ENCODE measurements at regions of chr17 and their contacts with region 1.

Region 1: DNA sequence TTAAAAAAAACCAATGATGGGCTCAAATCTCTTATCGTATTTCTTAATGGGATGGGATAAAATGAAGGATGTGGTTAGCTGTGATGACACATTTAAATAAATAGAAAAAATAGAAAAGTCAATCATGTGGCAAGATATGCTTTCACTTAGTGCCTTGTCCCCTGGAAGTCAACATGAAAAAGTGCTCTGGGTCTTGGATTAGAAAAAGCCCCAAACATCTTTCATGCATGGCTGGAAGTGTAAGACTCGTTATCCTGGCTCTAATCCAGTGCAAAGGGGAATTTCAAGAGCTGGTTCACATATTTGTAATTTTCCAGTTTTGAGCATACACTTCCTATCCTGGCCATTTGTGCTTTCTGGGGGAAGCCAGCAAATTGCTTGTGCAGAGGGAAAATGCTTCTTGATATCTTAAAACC is 160.9 kb downstream of the MAP2K6 start:
- DNase-seq: no peak
- H3K4me3 ChIP-seq: no peak overlapping the region
- H3K27ac ChIP-seq: peak overlapping the region in 1 of 4 donors; percentile 26
- H3K4me1 ChIP-seq: peaks cover 0 to 11% (median 0%) of the 10 kb centered on the region in 4 donors
- H3K27me3 ChIP-seq: peaks cover 8% of the 10 kb centered on the region
- CTCF ChIP-seq: no peak
- EP300 ChIP-seq: no peak
- POLR2A ChIP-seq: no peak

Region 2: DNA sequence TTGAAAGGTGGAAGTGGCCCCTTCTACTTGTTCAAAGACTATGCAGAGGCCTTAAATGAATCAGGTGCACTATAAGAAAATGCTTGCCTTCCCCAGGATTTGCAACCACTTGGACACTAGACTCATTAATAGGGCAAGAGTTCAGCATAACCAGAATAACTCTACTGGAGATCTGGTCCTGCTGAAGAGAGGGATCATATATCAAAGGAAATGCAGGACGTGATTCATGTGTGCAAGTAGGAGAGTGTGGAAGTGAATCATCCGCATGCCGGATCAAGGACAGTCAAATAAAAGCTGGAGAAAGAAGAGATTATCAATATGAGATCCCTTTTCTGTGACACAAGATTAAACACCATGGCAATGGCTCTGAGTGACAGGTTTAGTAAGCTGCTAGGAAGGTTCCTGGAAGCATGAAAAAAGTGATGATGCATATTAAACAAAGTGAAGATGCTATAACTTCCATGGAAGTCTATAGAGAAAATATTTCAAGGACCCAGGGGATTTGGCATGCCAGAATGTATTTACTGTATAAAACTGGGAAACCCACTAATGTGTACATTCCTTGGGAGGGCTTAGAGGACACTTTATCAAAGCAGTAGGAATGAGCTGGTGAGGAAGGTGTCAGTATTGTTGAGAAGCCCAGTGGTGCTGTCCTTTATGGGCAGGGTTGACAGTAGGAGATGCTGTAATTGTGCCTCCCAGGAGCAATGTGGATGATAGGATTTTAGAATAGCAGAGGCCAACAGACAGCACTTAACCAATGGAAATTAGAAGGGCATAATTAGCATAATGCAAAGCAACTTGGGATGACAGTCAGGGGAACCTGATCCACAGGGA is 753.3 kb before region 1 on chr17:
- in situ Hi-C with region 1: no loop called
- intact Hi-C with region 1: no loop called
- DNase-seq: no peak
- H3K4me3 ChIP-seq: no peak overlapping the region
- H3K27ac ChIP-seq: no peak overlapping the region
- H3K4me1 ChIP-seq: peaks cover 0 to 4% (median 0%) of the 10 kb centered on the region in 4 donors
- H3K27me3 ChIP-seq: no peaks in the 10 kb centered on the region
- CTCF ChIP-seq: no peak
- EP300 ChIP-seq: no peak
- POLR2A ChIP-seq: no peak

Region 3: GRCh38 chr17:70144260-70144846 is 569.0 kb after region 1 on chr17:
- in situ Hi-C with region 1: loop called in 1 of 4 experiments (anchors 10 kb)
- intact Hi-C with region 1: no loop called
- DNase-seq: no peak
- H3K4me3 ChIP-seq: no peak overlapping the region
- H3K27ac ChIP-seq: no peak overlapping the region
- H3K4me1 ChIP-seq: peaks cover 0 to 5% (median under 1%) of the 10 kb centered on the region in 4 donors
- H3K27me3 ChIP-seq: no peaks in the 10 kb centered on the region
- CTCF ChIP-seq: peak; percentile 62 to 77 (median 71)
- EP300 ChIP-seq: no peak
- POLR2A ChIP-seq: no peak

Region 4: GRCh38 chr17:70552230-70552981 is 977.1 kb after region 1 on chr17:
- in situ Hi-C with region 1: loop called in 3 of 4 experiments (anchors 25 kb)
- intact Hi-C with region 1: no loop called
- DNase-seq: no peak
- H3K4me3 ChIP-seq: no peak overlapping the region
- H3K27ac ChIP-seq: no peak overlapping the region
- H3K4me1 ChIP-seq: no peaks in the 10 kb centered on the region
- H3K27me3 ChIP-seq: no peaks in the 10 kb centered on the region
- CTCF ChIP-seq: peak; percentile 50 to 66 (median 54)
- EP300 ChIP-seq: no peak
- POLR2A ChIP-seq: no peak

Measured in transverse colon (tissue), 4 donors.